Activated CD4-positive, alpha-beta memory T cell treated with anti-CD3 and anti-CD28 coated beads for 36 hours (primary cell): ENCODE measurements at regions of chr3 and their contacts with region 1.

Region 1: GRCh38 chr3:128112357-128112968 is 11.1 kb downstream of the RUVBL1 start:
- DNase-seq: peak; percentile 76
- H3K4me3 Mint-ChIP-seq: peak overlapping the region; percentile 30
- H3K27ac Mint-ChIP-seq: peak overlapping the region; percentile 95
- H3K4me1 Mint-ChIP-seq: peaks cover 45% of the 10 kb centered on the region
- H3K27me3 Mint-ChIP-seq: no peaks in the 10 kb centered on the region

Region 2: GRCh38 chr3:127803619-127804018 is 308.8 kb before region 1 on chr3:
- CTCF ChIA-PET with region 1: no interaction called
- POLR2A ChIA-PET with region 1: no interaction called
- intact Hi-C with region 1: no loop called
- DNase-seq: no peak
- H3K4me3 Mint-ChIP-seq: no peak overlapping the region
- H3K27ac Mint-ChIP-seq: no peak overlapping the region
- H3K4me1 Mint-ChIP-seq: peaks cover 5% of the 10 kb centered on the region
- H3K27me3 Mint-ChIP-seq: no peaks in the 10 kb centered on the region

Region 3: GRCh38 chr3:128153156-128154041 is 40.9 kb after region 1 on chr3 and contains the start of gene EEFSEC:
- CTCF ChIA-PET with region 1: no interaction called
- POLR2A ChIA-PET with region 1: interaction called, 4 read pairs
- intact Hi-C with region 1: loop called (anchors 5 kb)
- DNase-seq: peak; percentile 91
- H3K4me3 Mint-ChIP-seq: peak within 1 kb of the TSS; percentile 85
- H3K27ac Mint-ChIP-seq: peak within 1 kb of the TSS; percentile 78
- H3K4me1 Mint-ChIP-seq: peaks cover 18% of the 10 kb centered on the region
- H3K27me3 Mint-ChIP-seq: no peaks in the 10 kb centered on the region
- total RNA-seq, gene EEFSEC: 16.1 to 17.2 TPM

Region 4: DNA sequence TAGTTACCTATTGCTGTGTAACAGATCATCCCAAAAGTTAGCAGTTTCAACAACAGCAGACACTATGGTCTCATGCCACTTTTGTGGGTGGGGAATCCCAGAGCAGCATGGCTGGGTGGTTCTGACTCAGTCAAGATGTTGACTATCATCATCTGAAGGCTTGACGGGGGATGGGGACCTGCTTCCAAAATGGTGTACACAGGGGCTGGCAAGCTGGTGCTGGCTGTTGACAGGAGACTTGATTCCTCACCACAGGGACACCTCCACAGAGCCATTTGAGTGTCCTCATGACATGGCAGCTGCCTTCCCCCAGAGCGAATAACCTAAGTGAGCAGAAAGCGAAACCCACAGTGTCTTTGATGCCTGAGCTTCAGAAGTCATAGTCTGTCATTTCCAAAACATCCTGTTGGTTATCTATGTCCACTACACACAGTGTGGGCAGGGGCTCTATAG is 335.1 kb after region 1 on chr3:
- CTCF ChIA-PET with region 1: no interaction called
- POLR2A ChIA-PET with region 1: no interaction called
- intact Hi-C with region 1: loop called (anchors 5 kb)
- DNase-seq: peak; percentile 89
- H3K4me3 Mint-ChIP-seq: peak overlapping the region; percentile 24
- H3K27ac Mint-ChIP-seq: peak overlapping the region; percentile 89
- H3K4me1 Mint-ChIP-seq: peaks cover 39% of the 10 kb centered on the region
- H3K27me3 Mint-ChIP-seq: no peaks in the 10 kb centered on the region